Adrenal gland (tissue), 19 donors: ENCODE measurements at regions of chr10 and their contacts with region 1.

Region 1: DNA sequence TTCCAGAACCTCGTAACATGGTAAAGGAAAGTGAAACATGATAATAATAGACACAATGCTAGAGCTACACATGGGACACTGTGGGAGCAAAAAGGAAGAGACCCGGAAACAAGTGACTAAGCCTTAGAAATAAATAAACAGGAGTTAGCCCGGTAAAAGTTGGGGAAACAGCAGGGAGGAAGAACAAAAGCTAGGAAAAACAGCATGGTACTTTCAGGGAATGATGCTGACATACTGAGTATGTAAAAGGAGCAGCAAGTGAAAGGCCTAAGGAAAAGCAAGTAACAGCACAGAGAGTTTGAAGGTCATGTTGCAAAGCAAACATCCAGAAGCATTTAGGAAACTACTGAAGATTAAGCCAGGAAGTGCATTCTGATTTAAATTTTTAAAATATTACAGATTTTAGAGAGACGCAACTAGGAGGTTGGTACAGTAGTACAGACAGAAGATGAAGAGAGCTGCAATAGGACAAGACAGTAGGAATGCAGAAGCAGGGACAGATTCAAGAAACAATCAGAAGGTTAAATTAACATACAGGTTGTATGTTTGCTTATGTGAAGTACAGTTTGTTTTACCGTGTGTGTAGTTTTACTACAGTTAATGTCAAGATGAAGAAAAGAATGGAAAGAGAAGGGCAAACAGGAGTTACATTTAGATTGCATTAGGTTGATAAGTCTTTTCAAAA is 63.7 kb downstream of the ARHGAP12 start:
- DNase-seq: no peak
- H3K4me3 ChIP-seq: peak overlapping the region in 1 of 4 donors; percentile 25
- H3K27ac ChIP-seq: peak overlapping the region in 3 of 5 donors; percentile 14 to 44 (median 25)
- H3K4me1 ChIP-seq: peaks cover 9 to 27% of the 10 kb centered on the region in 2 donors
- H3K27me3 ChIP-seq: no peaks in the 10 kb centered on the region
- CTCF ChIP-seq: no peak
- POLR2A ChIP-seq: no peak

Region 2: DNA sequence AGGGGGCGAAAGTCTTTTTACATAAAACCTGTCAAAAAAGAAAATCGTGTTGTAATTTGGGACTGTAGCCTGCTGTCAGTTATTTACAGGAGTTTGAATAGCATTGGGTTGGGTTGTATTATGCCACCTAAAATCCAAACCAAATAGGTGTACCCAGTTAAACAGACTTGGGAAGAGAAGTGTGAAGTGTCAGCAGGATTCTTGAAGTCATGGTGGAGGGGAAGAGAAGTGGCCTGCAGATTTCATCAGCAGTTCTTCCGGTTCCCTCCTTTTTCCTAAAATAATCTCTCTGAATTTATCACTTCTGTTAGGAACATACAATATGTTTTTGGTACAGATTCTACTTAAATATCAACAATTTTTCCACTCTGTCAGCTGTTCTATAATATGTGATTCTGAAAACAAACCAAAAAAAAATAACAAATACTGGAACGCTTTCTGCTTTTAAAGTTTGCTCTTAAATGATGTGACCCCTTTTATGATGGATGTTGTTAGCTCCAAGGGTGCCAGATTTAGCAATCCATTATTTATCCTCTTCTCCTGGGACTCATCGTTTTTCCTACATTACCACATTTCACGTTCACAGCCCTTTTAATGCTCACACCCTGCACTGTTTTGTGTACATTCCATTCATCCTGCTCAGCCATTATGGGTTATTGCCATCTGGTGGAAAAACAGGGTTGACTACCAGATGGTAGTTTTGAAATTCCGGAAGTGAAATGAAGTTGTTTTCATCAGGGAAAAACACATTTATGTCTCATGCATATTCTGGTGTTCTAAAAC is 82.4 kb after region 1 on chr10:
- intact Hi-C with region 1: loop called in 1 of 2 experiments (anchors 5 kb)
- DNase-seq: peak in 1 of 7 donors; percentile 25
- H3K4me3 ChIP-seq: peak overlapping the region in 1 of 4 donors; percentile 2
- H3K27ac ChIP-seq: no peak overlapping the region
- H3K4me1 ChIP-seq: peaks cover 14 to 33% of the 10 kb centered on the region in 2 donors
- H3K27me3 ChIP-seq: no peaks in the 10 kb centered on the region
- CTCF ChIP-seq: peak in 5 of 6 experiments; percentile 50 to 71 (median 57)
- POLR2A ChIP-seq: no peak

Region 3: DNA sequence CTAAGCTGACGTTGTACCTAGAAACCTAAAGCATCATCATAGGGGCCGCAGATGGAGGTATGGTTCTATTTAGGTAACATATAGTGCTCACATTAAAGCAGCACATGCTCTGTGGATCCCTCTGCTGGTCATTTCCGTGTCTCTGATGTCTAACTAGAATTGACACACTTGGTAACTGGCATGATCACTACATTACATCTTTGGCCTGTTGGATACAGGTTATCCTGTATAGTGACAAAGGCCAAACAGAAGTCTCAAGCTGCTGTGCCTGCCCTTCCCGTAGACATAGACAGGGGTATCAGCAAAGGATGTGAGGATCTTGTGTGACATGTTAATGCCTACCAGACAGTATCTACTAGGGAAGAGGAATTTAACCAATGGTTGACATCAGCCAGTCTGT is 140.1 kb after region 1 on chr10:
- intact Hi-C with region 1: loop called (anchors 10 kb)
- DNase-seq: peak in 4 of 7 donors; percentile 21 to 70 (median 38)
- H3K4me3 ChIP-seq: no peak overlapping the region
- H3K27ac ChIP-seq: peak overlapping the region in 2 of 5 donors; percentile 67 to 81
- H3K4me1 ChIP-seq: peaks cover 11 to 17% of the 10 kb centered on the region in 2 donors
- H3K27me3 ChIP-seq: no peaks in the 10 kb centered on the region
- CTCF ChIP-seq: peak; percentile 24 to 50 (median 38)
- POLR2A ChIP-seq: no peak